BJ (cell line): ENCODE measurements at regions of chr14 and their contacts with region 1.

Region 1: GRCh38 chr14:69346710-69347109 is 51.4 kb downstream of the ERH start:
- DNase-seq: no peak
- H3K4me3 ChIP-seq: no peak overlapping the region
- H3K27me3 ChIP-seq: peaks cover 1% of the 10 kb centered on the region; the same call in 1 of the 2 replicates
- CTCF ChIP-seq: peak; percentile 84

Region 2: GRCh38 chr14:69242311-69243224 is 104.1 kb before region 1 on chr14:
- CTCF ChIA-PET with region 1: interaction called, 31 read pairs
- POLR2A ChIA-PET with region 1: no interaction called
- DNase-seq: peak; percentile 27
- H3K4me3 ChIP-seq: no peak overlapping the region
- H3K27me3 ChIP-seq: no peaks in the 10 kb centered on the region
- CTCF ChIP-seq: peak; percentile 63

Region 3: DNA sequence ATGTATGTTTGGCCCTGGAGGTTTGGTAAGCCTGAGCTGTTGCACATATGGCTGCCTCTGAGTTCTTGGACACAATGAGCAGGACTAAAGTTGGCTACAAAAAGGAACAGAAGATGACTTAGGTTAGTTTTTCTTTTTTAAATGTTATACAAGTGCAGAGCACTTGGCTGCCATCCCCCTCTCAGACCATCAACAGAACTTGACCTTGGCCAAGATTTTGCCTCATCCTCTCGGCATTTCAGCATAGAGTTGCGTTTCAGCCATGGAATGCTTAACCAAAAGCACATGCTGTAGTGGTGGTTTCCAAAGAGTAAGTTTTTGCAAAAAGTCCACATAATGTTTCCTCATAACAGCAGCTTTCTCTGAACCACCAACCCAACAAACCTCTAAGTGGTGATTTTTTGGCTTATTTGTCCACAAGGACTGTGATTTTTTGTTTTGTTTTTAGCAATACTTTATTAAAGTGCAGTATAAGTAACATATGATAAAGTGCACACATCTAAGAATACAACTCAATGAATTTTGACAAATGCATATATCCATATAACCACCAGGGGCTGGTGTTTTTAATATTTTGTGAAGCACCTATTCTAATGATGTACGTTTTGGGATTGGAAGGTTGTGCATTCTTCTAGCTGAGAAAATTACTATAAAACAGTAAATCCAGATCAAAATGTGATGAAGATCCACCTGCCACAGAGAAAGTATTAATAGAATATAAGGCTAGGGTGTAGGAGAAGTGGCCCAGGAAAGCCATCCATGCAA is 98.9 kb before region 1 on chr14:
- CTCF ChIA-PET with region 1: interaction called, 31 read pairs
- POLR2A ChIA-PET with region 1: no interaction called
- DNase-seq: peak; percentile 92
- H3K4me3 ChIP-seq: no peak overlapping the region
- H3K27me3 ChIP-seq: no peaks in the 10 kb centered on the region
- CTCF ChIP-seq: peak; percentile 45; the same call in 1 of the 2 replicates

Region 4: GRCh38 chr14:69299286-69300035 is 47.2 kb before region 1 on chr14:
- CTCF ChIA-PET with region 1: interaction called, 13 read pairs
- POLR2A ChIA-PET with region 1: no interaction called
- DNase-seq: no peak
- H3K4me3 ChIP-seq: no peak overlapping the region
- H3K27me3 ChIP-seq: peaks cover 8% of the 10 kb centered on the region
- CTCF ChIP-seq: peak; percentile 16; the same call in 1 of the 2 replicates

Region 5: GRCh38 chr14:69325646-69326265 is 21.0 kb before region 1 on chr14:
- CTCF ChIA-PET with region 1: interaction called, 13 read pairs
- POLR2A ChIA-PET with region 1: no interaction called
- DNase-seq: no peak
- H3K4me3 ChIP-seq: no peak overlapping the region
- H3K27me3 ChIP-seq: peaks cover 4% of the 10 kb centered on the region; the same call in 1 of the 2 replicates
- CTCF ChIP-seq: 0 out of 2 replicates have a peak, but pooled peaks have one; percentile 10

Region 6: GRCh38 chr14:69335371-69335771 is 11.3 kb before region 1 on chr14:
- CTCF ChIA-PET with region 1: interaction called, 28 read pairs
- POLR2A ChIA-PET with region 1: no interaction called
- DNase-seq: no peak
- H3K4me3 ChIP-seq: no peak overlapping the region
- H3K27me3 ChIP-seq: peaks cover 8% of the 10 kb centered on the region
- CTCF ChIP-seq: no peak

Region 7: DNA sequence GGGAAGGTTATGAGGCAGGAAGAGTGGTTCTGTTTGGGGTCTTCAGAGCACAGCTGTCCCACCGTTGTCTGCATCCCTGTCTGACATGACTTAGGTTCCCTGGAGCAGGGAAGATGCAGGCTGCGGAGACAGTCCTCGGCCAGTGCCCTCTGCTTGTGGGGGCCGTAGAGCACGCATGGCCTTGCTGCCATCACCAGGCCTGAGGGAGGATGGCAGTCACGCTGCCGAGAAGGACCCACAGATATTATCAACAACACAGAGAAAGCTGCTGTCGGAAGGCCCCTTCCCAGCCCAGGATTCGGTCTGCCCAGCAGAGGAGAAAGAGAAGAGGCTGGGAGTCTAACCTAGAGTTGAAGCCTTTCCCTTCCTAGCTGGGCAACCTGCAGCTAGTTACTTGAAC is 16.3 kb after region 1 on chr14:
- CTCF ChIA-PET with region 1: interaction called, 29 read pairs
- POLR2A ChIA-PET with region 1: no interaction called
- DNase-seq: no peak
- H3K4me3 ChIP-seq: no peak overlapping the region
- H3K27me3 ChIP-seq: no peaks in the 10 kb centered on the region; the same call in 1 of the 2 replicates
- CTCF ChIP-seq: peak; percentile 66